IMR-90 (cell line): ENCODE measurements at regions of chr4 and their contacts with region 1.

Region 1: GRCh38 chr4:153573881-153574802 is 108.0 kb downstream of the TMEM131L start:
- DNase-seq: peak; percentile 88
- ATAC-seq: peak; percentile 97
- H3K4me3 ChIP-seq: no peak overlapping the region
- H3K27ac ChIP-seq: no peak overlapping the region
- H3K4me1 ChIP-seq: no peaks in the 10 kb centered on the region
- H3K27me3 ChIP-seq: no peaks in the 10 kb centered on the region
- CTCF ChIP-seq: peak; percentile 82
- POLR2A ChIP-seq: no peak
- RAD21 ChIP-seq: peak; percentile 93

Region 2: GRCh38 chr4:153189016-153189801 is 384.9 kb before region 1 on chr4:
- CTCF ChIA-PET with region 1: no interaction called
- POLR2A ChIA-PET with region 1: no interaction called
- dilution Hi-C with region 1: no loop called
- in situ Hi-C with region 1: no loop called
- intact Hi-C with region 1: no loop called
- DNase-seq: peak; percentile 21
- ATAC-seq: no peak
- H3K4me3 ChIP-seq: no peak overlapping the region
- H3K27ac ChIP-seq: no peak overlapping the region
- H3K4me1 ChIP-seq: no peaks in the 10 kb centered on the region; the same call in 1 of the 2 replicates
- H3K27me3 ChIP-seq: no peaks in the 10 kb centered on the region
- CTCF ChIP-seq: no peak
- POLR2A ChIP-seq: no peak
- RAD21 ChIP-seq: no peak

Region 3: GRCh38 chr4:153432968-153433753 is 141.0 kb before region 1 on chr4:
- CTCF ChIA-PET with region 1: interaction called, 4 read pairs
- POLR2A ChIA-PET with region 1: no interaction called
- dilution Hi-C with region 1: no loop called
- in situ Hi-C with region 1: no loop called
- intact Hi-C with region 1: loop called (anchors 1 kb)
- DNase-seq: peak; percentile 64
- ATAC-seq: no peak
- H3K4me3 ChIP-seq: no peak overlapping the region
- H3K27ac ChIP-seq: no peak overlapping the region
- H3K4me1 ChIP-seq: peaks cover 2% of the 10 kb centered on the region
- H3K27me3 ChIP-seq: no peaks in the 10 kb centered on the region
- CTCF ChIP-seq: peak; percentile 50
- POLR2A ChIP-seq: no peak
- RAD21 ChIP-seq: peak; percentile 53

Region 4: DNA sequence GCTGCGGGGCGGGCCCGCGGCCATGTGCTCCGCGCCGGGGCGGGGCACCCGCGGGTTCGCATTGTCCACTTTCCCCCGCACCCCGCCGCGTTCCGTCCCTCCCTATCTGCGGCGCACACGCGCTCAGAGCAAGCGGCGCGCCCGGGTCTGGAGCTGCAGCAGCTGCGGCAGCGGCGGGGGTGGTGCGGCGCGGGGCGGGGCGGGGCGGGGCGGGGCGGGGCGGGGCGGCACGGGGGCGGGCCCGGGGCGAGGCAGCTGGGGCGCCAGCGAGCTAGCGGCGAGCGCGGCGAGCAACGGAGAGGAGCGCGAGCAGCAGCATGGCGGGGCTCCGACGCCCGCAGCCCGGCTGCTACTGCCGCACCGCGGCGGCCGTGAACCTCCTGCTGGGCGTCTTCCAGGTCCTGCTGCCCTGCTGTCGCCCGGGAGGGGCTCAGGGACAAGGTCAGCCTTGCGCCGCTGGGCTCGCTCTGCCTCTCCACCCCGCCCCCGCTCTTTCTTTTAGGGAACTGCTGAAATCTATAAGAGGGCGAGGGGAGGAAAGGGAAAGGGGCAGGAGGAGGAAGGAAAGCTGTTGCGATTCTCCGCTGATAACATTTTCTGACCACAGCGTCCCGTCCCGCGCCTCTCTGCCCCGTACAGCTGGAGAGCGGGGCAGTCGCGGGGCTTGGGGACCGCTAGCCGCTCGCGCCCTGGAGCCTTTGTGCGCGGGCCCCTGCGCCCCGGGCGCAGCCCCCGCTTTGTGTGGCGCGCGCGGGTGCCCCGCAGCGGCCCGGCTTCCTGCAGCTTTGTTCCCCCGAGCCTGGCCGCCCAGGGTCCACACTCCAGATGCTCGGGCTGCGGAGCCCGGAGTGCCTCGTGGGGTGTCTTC is 107.8 kb before region 1 on chr4 and contains the start of gene TMEM131L:
- CTCF ChIA-PET with region 1: interaction called, 11 read pairs
- POLR2A ChIA-PET with region 1: no interaction called
- dilution Hi-C with region 1: no loop called
- in situ Hi-C with region 1: no loop called
- intact Hi-C with region 1: loop called (anchors 1 kb)
- DNase-seq: peak; percentile 52
- ATAC-seq: peak; percentile 90
- H3K4me3 ChIP-seq: peak within 1 kb of the TSS; percentile 96
- H3K27ac ChIP-seq: peak within 1 kb of the TSS; percentile 65
- H3K4me1 ChIP-seq: peaks cover 2% of the 10 kb centered on the region; the same call in 1 of the 2 replicates
- H3K27me3 ChIP-seq: no peaks in the 10 kb centered on the region
- CTCF ChIP-seq: no peak
- POLR2A ChIP-seq: 0 out of 2 replicates have a peak, but pooled peaks have one; percentile 33
- RAD21 ChIP-seq: no peak; the same call in 1 of the 2 replicates
- total RNA-seq, gene TMEM131L: 16.1 and 23.8 TPM in 2 replicates

Region 5: GRCh38 chr4:153541456-153542096 is 32.6 kb before region 1 on chr4:
- CTCF ChIA-PET with region 1: interaction called, 11 read pairs
- POLR2A ChIA-PET with region 1: no interaction called
- dilution Hi-C with region 1: no loop called
- in situ Hi-C with region 1: no loop called
- intact Hi-C with region 1: no loop called
- DNase-seq: peak; percentile 95
- ATAC-seq: peak; percentile 87
- H3K4me3 ChIP-seq: no peak overlapping the region
- H3K27ac ChIP-seq: no peak overlapping the region; the same call in 1 of the 2 replicates
- H3K4me1 ChIP-seq: peaks cover 8% of the 10 kb centered on the region
- H3K27me3 ChIP-seq: no peaks in the 10 kb centered on the region
- CTCF ChIP-seq: peak; percentile 45
- POLR2A ChIP-seq: no peak
- RAD21 ChIP-seq: peak; percentile 64